ENCODE measurements at regions of chr2 and their contacts with region 1.

Region 1: DNA sequence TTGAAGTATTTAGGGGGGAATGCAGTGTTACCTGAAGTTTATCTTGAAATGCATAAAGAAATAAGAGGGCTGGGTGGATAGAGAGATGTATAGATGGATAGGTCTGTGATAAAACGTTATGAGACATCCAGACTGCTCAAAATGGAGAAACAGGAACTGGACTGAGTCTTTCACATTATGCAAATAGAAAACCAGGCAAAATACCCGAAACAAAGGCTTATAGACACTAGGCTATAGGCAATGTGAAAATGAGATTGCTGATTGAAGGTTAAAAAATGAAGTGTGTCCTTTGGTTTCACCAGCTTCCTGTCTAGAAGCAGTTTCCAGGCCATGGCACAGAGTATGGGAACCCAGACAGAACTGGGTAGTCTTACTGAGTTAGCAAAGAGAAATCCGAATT is 24.9 kb upstream of the SLC3A1 start:
- DNase-seq: no peak
- H3K4me3 ChIP-seq: no peak overlapping the region
- H3K27ac ChIP-seq: no peak overlapping the region
- H3K4me1 ChIP-seq: peaks cover 0 to 3% of the 10 kb centered on the region in 2 donors
- H3K27me3 ChIP-seq: no peaks in the 10 kb centered on the region
- CTCF ChIP-seq: no peak
- POLR2A ChIP-seq: no peak

Region 2: DNA sequence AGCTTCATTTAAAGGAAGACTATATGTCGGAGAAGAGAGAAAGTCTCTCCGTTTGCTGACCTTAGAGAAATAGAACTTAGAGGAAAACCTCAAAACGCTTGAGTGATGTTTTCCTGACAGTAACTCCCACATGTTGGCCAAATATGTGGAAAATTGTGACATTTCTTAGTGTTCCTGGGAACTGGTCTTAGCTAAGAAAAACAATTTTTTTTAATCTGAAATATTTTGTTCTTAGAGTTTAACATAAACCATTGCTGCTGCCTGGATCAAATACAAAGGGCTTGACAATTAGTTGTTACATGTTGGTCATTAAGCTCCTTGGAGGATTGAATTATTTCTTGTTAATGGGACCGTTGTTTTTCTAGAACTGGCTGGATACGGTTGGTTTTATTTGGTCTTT is 460.2 kb before region 1 on chr2:
- intact Hi-C with region 1: no loop called
- DNase-seq: no peak
- H3K4me3 ChIP-seq: no peak overlapping the region
- H3K27ac ChIP-seq: peak overlapping the region in 1 of 3 donors; percentile 7
- H3K4me1 ChIP-seq: peaks cover 0 to 4% of the 10 kb centered on the region in 2 donors
- H3K27me3 ChIP-seq: no peaks in the 10 kb centered on the region
- CTCF ChIP-seq: no peak
- POLR2A ChIP-seq: no peak

Region 3: DNA sequence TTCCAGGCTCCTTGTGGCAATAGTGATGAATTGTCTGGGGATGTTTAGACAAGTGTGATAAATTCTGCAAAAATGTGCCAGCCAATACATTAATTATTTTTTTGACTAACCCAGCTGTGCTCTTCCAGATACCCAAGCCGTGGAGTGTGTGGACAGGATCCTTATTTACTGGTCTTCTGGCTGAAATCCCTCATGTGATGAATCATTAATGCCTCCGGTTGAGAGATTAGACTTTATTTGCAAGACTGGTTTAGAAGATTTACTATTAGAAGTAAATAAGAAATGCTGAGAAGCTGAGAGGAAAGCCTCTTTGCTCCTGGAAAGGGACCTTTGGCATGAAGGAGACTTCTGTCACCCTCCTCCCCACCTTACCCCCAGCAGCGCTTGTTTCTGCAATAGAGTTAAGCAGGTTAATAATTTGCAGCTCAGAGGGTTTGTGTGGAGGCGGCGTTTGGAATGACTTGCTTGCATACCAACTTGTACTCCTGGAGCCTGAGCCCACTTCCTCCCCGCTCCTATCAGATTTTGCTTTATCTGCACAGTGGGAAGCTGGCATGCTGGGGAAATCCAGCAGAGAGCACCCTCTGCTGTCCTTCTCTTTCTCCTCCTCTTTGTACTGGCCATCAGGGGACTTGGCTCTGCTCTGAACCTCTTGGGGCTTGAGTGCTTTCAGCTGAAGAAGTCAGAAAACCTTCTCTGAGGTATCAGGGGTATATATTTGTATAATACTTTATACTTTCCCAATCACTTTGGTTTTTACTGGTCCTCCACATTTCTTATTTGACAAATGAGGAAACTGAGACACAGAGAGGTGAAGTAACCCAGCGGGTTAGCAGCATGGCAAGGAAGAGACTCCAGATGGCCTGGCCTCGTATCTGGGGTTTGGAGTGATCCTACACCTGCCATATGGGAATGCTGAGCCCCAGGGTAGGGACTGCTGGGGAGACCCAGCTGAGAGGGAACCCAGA is 41.2 kb after region 1 on chr2:
- intact Hi-C with region 1: loop called (anchors 5 kb)
- DNase-seq: peak; percentile 83
- H3K4me3 ChIP-seq: no peak overlapping the region
- H3K27ac ChIP-seq: peak overlapping the region in 1 of 3 donors; percentile 36
- H3K4me1 ChIP-seq: peaks cover 0 to 10% of the 10 kb centered on the region in 2 donors
- H3K27me3 ChIP-seq: no peaks in the 10 kb centered on the region
- CTCF ChIP-seq: peak; percentile 12 to 92 (median 69)
- POLR2A ChIP-seq: no peak

Region 4: GRCh38 chr2:44348400-44348799 is 98.0 kb after region 1 on chr2:
- intact Hi-C with region 1: no loop called
- DNase-seq: no peak
- H3K4me3 ChIP-seq: no peak overlapping the region
- H3K27ac ChIP-seq: peak overlapping the region in 1 of 3 donors; percentile 1
- H3K4me1 ChIP-seq: peaks cover 14 to 17% of the 10 kb centered on the region in 2 donors
- H3K27me3 ChIP-seq: no peaks in the 10 kb centered on the region
- CTCF ChIP-seq: no peak
- POLR2A ChIP-seq: no peak